HEK293 (cell line): ENCODE measurements at regions of chr4 and their contacts with region 1.

Region 1: DNA sequence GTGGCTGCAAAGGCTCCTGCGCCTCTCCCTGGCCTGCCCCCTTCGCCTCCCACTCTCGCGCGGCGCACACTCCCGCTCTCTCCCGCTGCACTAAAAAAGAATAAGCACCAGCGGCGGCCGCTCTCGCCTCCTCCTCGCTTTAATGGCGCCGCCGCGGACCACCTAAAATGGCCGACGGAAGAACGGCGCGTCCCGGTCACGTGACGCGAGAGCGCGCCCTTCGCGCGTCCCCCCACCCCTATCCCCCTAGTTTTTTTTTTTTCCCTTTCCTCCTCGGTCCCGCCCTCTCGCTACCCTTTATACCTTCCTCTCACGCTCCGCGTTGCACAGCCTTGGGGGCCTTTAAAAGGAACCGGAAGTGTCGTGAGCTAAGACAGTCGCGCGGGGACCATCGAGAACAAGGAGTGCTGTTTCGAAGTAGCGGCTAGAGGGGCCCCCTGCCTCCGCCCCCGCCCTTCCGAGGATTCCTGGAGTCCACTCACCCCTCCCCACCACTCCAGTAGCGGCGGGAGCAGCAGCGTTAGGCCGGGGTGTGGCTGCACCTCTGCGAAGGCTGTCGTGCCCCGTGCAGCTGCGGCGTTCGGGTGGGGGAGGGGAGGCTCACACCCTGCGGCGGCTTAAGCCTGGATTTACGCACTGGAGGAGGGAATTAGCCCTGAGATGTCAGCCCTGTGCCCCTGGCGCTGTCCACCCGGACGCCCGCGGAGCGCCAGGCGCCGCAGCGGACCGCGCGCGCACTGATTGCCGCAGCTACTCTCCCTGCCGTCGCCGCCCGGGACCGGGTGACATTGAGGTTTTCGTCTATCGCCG is at the start of gene HNRNPD:
- H3K4me3 ChIP-seq: peak within 1 kb of the TSS; percentile 97
- H3K27ac ChIP-seq: peak within 1 kb of the TSS; percentile 98
- H3K4me1 ChIP-seq: 0 out of 2 replicates have a peak, but pooled peaks cover 1% of the 10 kb centered on the region
- CTCF ChIP-seq: peak; percentile 35; the same call in 1 of the 2 replicates

Region 2: DNA sequence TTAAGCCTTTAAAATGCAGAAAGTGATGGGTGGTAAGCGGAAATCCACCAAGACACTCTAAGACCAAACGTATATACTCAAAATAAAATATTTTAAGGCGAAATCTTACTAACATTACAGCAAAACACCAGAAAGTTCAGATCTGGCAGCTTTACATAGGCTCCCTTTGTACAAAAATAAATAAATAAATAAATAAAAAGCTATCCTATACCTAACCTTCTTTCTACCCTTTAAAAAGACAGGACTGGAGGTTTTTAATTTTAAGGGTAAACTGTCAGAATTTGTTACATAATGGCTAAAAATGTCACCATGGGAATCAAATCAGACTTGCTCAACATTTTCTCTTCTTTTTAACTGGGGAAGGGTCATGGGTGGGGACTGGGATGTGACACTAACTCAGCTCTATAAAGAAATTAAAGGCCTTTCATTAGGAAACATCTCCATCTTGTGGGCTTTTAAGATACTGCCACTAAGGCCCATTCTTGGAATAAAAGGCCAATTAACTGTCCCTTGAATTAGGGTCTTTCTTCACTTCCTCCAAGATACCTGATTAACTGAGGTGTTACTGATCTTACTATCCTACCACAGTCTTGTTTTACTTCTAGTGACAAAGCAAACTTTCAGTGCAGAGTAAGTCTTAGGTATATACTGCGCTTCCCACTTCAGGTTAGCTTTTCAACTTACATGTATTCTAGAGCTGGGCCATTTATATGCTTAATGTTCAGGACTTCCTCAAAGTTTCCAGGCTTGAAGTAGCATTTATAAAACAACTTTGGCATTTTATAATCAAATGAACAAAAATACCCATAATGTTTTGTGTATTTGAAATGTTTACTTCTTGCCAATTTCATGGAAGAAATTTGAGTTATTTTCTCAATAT is 13.5 kb before region 1 on chr4:
- CTCF ChIA-PET with region 1: interaction called, 3 read pairs
- POLR2A ChIA-PET with region 1: interaction called, 11 read pairs
- H3K4me3 ChIP-seq: no peak overlapping the region
- H3K27ac ChIP-seq: no peak overlapping the region
- H3K4me1 ChIP-seq: no peaks in the 10 kb centered on the region
- CTCF ChIP-seq: no peak

Region 3: DNA sequence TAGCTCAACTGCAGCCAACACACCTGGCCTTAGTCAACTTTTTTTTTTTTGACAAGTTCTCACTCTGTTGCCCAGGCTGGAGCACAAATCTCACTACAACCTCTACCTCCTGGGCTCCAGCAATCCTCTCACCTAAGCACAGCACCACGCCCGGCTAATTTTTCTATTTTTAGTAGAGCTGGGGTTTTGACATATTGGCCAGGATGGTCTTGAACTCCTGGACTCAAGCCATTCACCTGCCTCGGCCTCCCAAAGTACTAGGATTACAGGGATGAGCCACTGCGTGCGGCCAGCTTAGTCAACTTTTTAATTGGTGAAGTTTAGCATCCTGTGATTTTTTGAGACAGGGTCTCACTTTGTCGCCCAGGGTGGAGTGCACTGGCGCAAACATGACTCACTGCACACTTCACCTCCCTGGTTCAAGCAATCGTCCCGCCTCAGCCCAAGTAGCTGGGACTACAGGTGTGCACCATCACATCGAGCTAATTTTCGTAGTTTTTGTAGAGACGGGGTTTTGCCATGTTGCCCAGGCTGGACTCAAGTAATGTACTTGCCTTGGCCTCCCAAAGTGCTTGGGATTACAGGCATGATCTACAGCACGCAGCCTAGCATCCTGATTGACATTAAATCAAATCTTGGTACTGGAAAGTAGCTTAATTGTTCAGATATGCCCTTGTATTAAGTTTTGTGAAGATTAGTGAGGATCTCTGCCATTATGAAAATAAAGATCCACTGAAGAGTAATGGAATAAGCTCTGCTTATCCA is 48.0 kb after region 1 on chr4:
- CTCF ChIA-PET with region 1: no interaction called
- POLR2A ChIA-PET with region 1: interaction called, 10 read pairs
- H3K4me3 ChIP-seq: no peak overlapping the region
- H3K27ac ChIP-seq: no peak overlapping the region
- H3K4me1 ChIP-seq: no peaks in the 10 kb centered on the region
- CTCF ChIP-seq: no peak

Region 4: GRCh38 chr4:82428969-82429727 is 55.1 kb after region 1 on chr4:
- CTCF ChIA-PET with region 1: interaction called, 6 read pairs
- POLR2A ChIA-PET with region 1: interaction called, 54 read pairs
- H3K4me3 ChIP-seq: peak overlapping the region; percentile 96
- H3K27ac ChIP-seq: peak overlapping the region; percentile 98
- H3K4me1 ChIP-seq: no peaks in the 10 kb centered on the region
- CTCF ChIP-seq: peak; percentile 65

Region 5: GRCh38 chr4:82667761-82668505 is 293.9 kb after region 1 on chr4:
- CTCF ChIA-PET with region 1: no interaction called
- POLR2A ChIA-PET with region 1: no interaction called
- H3K4me3 ChIP-seq: no peak overlapping the region
- H3K27ac ChIP-seq: no peak overlapping the region
- H3K4me1 ChIP-seq: no peaks in the 10 kb centered on the region
- CTCF ChIP-seq: no peak